AG04449 (cell line): ENCODE measurements at regions of chr19 and their contacts with region 1.

Region 1: DNA sequence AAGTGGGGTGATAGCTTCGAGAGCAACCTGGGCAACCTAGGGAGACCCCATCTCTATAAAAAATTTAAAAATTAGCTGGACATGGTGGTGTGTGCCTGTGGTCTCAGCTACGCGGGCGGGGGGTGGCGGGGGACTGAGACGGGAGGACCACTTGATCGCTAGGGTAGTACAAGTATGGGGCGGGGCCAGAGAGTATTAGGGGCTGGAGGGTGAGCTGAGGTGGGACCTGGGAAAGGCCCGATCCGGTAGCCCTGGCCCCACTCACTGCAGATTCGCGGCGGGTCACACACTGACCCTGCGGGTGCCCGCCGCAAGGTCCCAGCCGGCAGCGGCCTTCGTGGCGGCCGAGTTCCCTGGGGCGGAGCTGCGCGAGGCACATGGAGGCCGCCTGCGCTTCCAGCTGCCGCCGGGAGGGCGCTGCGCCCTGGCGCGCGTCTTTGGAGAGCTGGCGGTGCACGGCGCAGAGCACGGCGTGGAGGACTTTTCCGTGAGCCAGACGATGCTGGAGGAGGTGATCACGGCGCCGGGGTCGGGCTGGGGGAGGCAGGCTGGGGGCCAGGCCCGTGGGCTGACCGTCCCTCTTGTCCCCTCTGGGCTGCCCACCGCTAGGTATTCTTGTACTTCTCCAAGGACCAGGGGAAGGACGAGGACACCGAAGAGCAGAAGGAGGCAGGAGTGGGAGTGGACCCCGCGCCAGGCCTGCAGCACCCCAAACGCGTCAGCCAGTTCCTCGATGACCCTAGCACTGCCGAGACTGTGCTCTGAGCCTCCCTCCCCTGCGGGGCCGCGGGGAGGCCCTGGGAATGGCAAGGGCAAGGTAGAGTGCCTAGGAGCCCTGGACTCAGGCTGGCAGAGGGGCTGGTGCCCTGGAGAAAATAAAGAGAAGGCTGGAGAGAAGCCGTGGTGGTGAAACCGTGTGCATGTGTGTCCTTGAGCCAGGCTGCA is 2.0 kb upstream of the ARHGAP45 start:
- DNase-seq: no peak
- H3K4me3 ChIP-seq: no peak overlapping the region
- CTCF ChIP-seq: peak; percentile 82

Region 2: DNA sequence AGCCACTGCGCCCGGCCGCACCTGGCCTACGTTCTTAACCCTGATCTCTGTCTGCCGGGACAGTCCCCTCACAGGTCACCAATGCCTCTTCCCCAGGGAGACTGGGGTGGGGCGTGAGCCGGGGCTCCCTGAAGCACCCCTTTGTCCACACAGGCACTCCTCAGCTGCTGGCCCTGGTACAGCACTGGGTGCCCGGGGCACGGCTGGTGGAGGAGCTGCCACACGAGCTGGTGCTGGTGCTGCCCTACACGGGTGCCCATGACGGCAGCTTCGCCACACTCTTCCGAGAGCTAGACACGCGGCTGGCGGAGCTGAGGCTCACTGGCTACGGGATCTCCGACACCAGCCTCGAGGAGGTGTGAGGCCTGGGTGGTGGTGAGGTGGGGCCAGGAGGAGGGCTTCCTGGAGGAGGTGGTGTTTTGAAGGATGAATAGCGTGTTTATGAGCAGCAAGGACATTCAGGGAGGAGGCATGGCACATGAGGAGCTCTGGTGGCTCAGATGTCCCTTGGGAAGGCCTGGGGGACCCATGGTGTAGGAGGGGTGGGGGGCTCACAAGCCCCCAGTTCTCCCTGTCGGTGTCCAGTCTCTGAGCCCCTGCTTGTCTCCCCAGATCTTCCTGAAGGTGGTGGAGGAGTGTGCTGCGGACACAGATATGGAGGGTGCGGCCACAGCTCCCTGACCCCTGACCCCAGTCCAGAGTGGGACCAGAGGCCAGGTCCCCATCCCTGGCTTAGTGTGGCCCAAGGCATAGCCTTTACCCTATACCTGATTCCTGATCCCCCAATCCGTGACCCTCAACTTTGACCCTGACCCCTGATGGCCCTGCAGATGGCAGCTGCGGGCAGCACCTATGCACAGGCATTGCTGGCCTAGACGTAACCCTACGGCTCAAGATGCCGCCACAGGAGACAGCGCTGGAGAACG is 11.5 kb before region 1 on chr19:
- CTCF ChIA-PET with region 1: interaction called, 15 read pairs
- POLR2A ChIA-PET with region 1: no interaction called
- DNase-seq: no peak
- H3K4me3 ChIP-seq: no peak overlapping the region
- CTCF ChIP-seq: no peak

Region 3: GRCh38 chr19:1079566-1080111 is 14.7 kb after region 1 on chr19:
- CTCF ChIA-PET with region 1: interaction called, 11 read pairs
- POLR2A ChIA-PET with region 1: no interaction called
- DNase-seq: no peak
- H3K4me3 ChIP-seq: no peak overlapping the region
- CTCF ChIP-seq: no peak